ENCODE measurements at regions of chr6 and their contacts with region 1.

Region 1: DNA sequence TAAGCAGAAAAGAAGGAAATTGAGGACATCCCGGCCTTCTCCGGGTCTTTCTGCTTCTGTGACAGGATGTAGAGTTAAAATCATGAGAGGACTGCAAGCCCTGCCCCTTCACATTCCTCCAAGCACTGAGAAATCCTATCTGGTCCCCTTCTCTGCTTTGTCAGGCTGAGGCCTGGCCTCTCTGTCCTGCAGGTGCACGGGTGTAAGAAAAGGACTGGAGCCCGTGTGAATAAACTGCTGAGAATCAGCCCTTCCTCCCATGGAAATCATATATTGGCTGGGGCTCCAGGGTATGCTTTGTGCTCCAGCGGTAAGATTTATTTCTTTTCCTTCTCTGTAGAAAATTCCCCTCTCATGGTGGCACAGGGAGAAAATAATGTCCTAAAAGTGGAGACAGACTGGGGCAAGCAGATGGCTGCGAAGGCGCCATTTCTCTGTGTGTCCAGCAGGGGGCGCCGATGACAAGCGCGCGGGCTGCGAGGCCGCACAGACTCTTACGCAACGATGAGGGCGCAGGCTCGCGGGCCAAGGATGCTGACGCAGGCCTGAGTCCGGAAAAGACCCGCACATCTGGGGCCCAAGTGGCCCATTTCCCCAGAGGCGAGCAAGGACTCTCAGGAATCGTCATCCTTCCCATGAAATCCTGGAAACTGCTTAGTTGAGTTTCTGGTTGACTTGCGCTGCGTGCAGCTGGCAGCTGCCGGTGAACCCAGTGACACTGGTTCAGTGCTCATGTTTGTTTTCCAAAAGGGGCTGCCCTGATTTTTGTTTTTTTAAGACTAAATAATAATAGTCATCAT is 258.6 kb downstream of the ADGB start:
- DNase-seq: peak; percentile 75 to 84
- ATAC-seq: peak; percentile 95 to 98 (median 96)
- H3K4me3 ChIP-seq: peak overlapping the region in 9 of 10 donors; percentile 14 to 56 (median 43)
- H3K27ac ChIP-seq: peak overlapping the region in 9 of 10 donors; percentile 30 to 79 (median 59)
- H3K4me1 ChIP-seq: peaks cover 0 to 9% (median 0%) of the 10 kb centered on the region in 9 donors
- H3K27me3 ChIP-seq: no peaks in the 10 kb centered on the region
- CTCF ChIP-seq: peak in 8 of 9 donors; percentile 98 to 99 (median 98)

Region 2: GRCh38 chr6:146785001-146785585 is 72.3 kb before region 1 on chr6:
- intact Hi-C with region 1: no loop called
- DNase-seq: no peak
- ATAC-seq: peak in 3 of 8 donors; percentile 33 to 60 (median 58)
- H3K4me3 ChIP-seq: no peak overlapping the region
- H3K27ac ChIP-seq: no peak overlapping the region
- H3K4me1 ChIP-seq: no peaks in the 10 kb centered on the region
- H3K27me3 ChIP-seq: no peaks in the 10 kb centered on the region
- CTCF ChIP-seq: peak in 8 of 9 donors; percentile 30 to 60 (median 45)

Region 3: GRCh38 chr6:146913842-146914488 is 56.6 kb after region 1 on chr6:
- intact Hi-C with region 1: no loop called
- DNase-seq: peak; percentile 39 to 51
- ATAC-seq: peak; percentile 86 to 96 (median 92)
- H3K4me3 ChIP-seq: peak overlapping the region in 7 of 10 donors; percentile 14 to 33 (median 29)
- H3K27ac ChIP-seq: peak overlapping the region; percentile 34 to 82 (median 58)
- H3K4me1 ChIP-seq: peaks cover 0 to 42% (median 15%) of the 10 kb centered on the region in 9 donors
- H3K27me3 ChIP-seq: no peaks in the 10 kb centered on the region
- CTCF ChIP-seq: no peak

Region 4: GRCh38 chr6:146962329-146962728 is 104.9 kb after region 1 on chr6:
- intact Hi-C with region 1: no loop called
- DNase-seq: no peak
- ATAC-seq: no peak
- H3K4me3 ChIP-seq: no peak overlapping the region
- H3K27ac ChIP-seq: no peak overlapping the region
- H3K4me1 ChIP-seq: no peaks in the 10 kb centered on the region
- H3K27me3 ChIP-seq: no peaks in the 10 kb centered on the region
- CTCF ChIP-seq: no peak

Region 5: DNA sequence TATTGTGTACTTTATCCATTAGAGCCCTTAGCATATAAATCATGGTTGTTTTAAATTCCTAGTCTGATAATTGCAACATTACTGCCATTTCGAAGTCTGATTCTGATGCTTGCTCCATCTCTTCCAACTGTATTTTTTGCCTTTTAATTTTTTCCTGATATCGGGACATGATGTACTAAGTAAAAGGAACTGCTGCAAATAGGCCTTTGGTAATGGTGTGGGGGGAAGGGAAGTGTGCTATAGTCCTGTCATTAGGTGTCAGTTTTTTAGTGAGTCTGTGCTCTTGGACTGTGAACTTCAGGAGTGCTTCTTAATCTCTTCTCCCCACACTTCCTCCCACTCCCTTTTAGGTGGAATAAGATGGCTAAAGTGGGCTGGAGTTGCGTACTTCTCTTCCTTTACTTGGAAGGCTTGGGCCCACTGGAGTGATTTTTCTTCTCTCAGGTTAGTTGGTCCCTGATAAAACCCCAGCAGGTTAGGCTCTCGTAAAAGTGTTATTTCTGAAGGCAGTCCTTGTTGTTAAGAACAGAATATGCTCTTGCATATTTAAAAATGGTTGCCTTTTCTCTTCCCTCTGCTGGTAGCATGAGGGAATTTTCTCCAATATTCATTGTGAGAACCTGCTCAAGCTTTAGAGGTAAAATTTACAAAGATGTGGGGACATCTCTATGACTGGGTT is 364.9 kb after region 1 on chr6:
- intact Hi-C with region 1: loop called in 1 of 10 experiments (anchors 10 kb)
- DNase-seq: no peak
- ATAC-seq: peak in 2 of 8 donors; percentile 27 to 63
- H3K4me3 ChIP-seq: no peak overlapping the region
- H3K27ac ChIP-seq: no peak overlapping the region
- H3K4me1 ChIP-seq: peaks cover 0 to 24% (median 4%) of the 10 kb centered on the region in 9 donors
- H3K27me3 ChIP-seq: no peaks in the 10 kb centered on the region
- CTCF ChIP-seq: peak in 7 of 9 donors; percentile 13 to 45 (median 33)

Region 6: DNA sequence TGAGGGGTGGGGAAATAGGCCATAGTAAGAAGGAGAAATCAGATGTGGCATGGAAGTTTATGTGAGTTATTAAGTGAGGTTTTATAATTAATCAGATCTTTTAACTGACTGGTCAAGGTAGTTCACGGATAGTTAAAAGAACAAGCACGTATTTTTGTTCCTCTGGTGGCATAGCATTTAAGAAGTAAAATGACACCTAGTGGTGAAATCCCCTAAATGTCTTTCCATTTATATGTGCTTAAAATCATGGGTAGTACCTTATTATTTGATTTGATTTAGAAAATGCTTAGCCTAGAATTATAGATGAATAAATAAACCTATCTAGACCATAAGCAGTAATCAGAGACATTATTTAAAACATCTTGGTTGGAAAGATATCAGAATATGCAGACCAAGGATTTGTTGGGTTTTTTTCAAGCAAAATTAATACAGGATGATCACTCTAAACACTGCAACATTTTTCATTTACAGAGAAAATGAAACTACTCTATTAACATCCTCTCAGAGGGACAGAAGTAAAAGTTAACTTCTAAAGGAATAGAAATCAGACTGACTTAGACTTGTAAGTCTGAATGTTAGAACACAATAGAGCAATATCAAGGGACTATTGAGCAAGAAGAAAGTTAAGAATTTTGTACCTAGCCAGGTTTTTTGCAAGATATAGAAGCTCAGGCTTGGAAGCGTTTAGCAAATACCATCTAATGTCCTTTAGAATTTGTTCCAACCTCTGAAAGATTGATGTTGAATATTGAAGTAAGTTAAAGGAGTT is 427.9 kb after region 1 on chr6:
- intact Hi-C with region 1: loop called in 9 of 10 experiments (anchors 1 to 5 kb)
- DNase-seq: no peak
- ATAC-seq: peak in 4 of 8 donors; percentile 40 to 67 (median 52)
- H3K4me3 ChIP-seq: no peak overlapping the region
- H3K27ac ChIP-seq: peak overlapping the region in 1 of 10 donors; percentile 24
- H3K4me1 ChIP-seq: peaks cover 0 to 30% (median 0%) of the 10 kb centered on the region in 9 donors
- H3K27me3 ChIP-seq: no peaks in the 10 kb centered on the region
- CTCF ChIP-seq: peak; percentile 33 to 73 (median 55)

Measured in heart right ventricle (tissue), 16 donors.